HepG2 (cell line): ENCODE measurements at regions of chr10 and their contacts with region 1.

Region 1: DNA sequence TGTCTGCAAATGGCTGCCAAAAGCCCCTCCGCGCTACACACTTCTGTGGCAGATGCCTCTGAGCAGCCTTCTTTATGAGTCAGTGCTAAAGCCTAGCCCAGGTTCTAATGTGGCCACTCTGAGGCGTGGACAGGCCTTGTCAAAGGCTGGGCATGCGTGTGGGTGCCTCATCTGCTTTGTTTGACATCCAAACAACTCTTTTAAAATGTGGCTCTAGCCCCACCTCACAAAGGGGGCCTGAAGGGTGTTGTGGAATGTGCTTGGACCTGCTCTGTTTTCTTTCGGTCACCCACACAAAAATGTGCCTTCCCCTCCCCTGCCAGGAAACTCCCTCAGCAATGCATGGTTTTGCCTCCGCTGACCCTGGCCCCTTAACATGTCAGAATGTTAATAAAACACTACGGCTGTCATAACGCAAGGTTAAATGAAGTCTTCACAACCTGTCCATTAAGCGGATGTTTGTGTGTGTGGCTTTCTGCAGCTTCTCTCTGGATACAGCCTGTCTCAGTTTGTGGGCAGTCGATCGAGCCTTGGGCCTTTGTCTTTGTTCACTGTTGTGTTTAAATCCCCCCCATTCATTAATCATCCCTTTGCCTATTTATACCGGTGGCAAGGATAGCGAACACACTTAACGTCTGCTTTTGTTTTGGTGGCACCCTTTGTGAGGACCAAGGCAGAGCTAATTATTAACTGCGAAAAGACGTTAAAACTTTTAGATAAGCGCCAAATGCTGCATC is 718.9 kb downstream of the LRMDA start:
- DNase-seq: peak; percentile 96
- ATAC-seq: peak; percentile 96
- H3K4me3 ChIP-seq: peak overlapping the region; percentile 39 to 63 (median 54); a peak in 5 of 6 replicates
- H3K27ac ChIP-seq: peak overlapping the region; percentile 97
- H3K4me1 ChIP-seq: peaks cover 45% of the 10 kb centered on the region
- H3K27me3 ChIP-seq: no peaks in the 10 kb centered on the region
- CTCF ChIP-seq: peak; percentile 23
- EP300 ChIP-seq: peak in 1 of 2 experiments; percentile 90; a peak in 2 of 4 replicates
- POLR2A ChIP-seq: peak; percentile 57 to 79
- RAD21 ChIP-seq: no peak; the same call in 1 of the 2 replicates

Region 2: GRCh38 chr10:75165684-75166622 is 984.4 kb before region 1 on chr10:
- CTCF ChIA-PET with region 1: no interaction called
- POLR2A ChIA-PET with region 1: no interaction called
- in situ Hi-C with region 1: no loop called
- intact Hi-C with region 1: no loop called
- DNase-seq: no peak
- ATAC-seq: no peak
- H3K4me3 ChIP-seq: no peak overlapping the region
- H3K27ac ChIP-seq: peak overlapping the region; percentile 34
- H3K4me1 ChIP-seq: peaks cover 51% of the 10 kb centered on the region
- H3K27me3 ChIP-seq: no peaks in the 10 kb centered on the region
- CTCF ChIP-seq: no peak
- EP300 ChIP-seq: no peak
- POLR2A ChIP-seq: no peak
- RAD21 ChIP-seq: no peak

Region 3: GRCh38 chr10:76026905-76027304 is 123.4 kb before region 1 on chr10:
- CTCF ChIA-PET with region 1: no interaction called
- POLR2A ChIA-PET with region 1: interaction called, 14 read pairs
- in situ Hi-C with region 1: no loop called
- intact Hi-C with region 1: no loop called
- DNase-seq: no peak
- ATAC-seq: no peak
- H3K4me3 ChIP-seq: no peak overlapping the region
- H3K27ac ChIP-seq: peak overlapping the region; percentile 92
- H3K4me1 ChIP-seq: peaks cover 97% of the 10 kb centered on the region
- H3K27me3 ChIP-seq: no peaks in the 10 kb centered on the region
- CTCF ChIP-seq: peak; percentile 26; the same call in 1 of the 2 replicates
- EP300 ChIP-seq: no peak; a peak in 1 of 4 replicates
- POLR2A ChIP-seq: peak in 1 of 2 experiments; percentile 5; a peak in 1 of 4 replicates
- RAD21 ChIP-seq: no peak

Region 4: DNA sequence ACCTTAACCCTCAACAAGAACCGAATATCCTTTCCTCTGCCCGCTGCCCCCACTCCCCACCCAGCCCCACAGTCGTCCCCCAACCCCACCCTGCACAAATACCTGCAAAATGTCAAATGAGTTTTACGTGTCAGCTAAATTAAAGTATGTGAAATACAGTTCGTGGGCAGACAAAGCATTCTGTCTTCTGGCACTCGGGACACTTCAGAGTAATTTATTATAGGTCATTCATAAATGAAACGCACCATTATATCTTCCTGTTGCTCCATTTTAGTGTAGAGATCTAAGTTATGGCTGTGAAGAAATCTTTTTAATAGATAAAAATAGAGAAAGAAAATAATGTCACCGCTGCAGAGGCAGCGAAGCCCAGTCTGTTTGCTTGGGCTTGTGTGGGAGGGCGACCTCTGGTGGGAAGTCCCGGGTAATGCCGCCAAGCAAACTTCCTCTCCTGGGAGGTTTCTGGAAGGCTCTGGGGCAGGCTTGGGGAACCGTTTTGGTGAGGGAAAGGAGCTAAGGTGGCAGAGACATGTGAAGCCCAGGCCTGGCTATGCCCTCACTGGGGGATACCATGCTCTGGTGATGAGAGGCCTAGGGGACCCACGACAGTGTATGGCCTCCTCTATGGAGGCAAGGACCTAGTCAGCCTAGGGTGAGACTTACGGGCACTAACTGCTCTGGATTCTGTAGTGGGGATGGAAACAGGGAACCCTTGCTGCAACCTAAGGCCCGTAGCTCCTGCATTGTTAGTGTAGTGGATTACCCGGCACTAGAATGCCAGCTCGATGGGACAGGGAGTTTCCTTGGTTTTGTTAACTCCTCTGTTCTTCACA is 114.0 kb before region 1 on chr10:
- CTCF ChIA-PET with region 1: no interaction called
- POLR2A ChIA-PET with region 1: interaction called, 14 read pairs
- in situ Hi-C with region 1: no loop called
- intact Hi-C with region 1: no loop called
- DNase-seq: no peak
- ATAC-seq: 0 out of 3 replicates have a peak, but pooled peaks have one; percentile 15
- H3K4me3 ChIP-seq: no peak overlapping the region
- H3K27ac ChIP-seq: peak overlapping the region; percentile 97
- H3K4me1 ChIP-seq: peaks cover 57% of the 10 kb centered on the region
- H3K27me3 ChIP-seq: no peaks in the 10 kb centered on the region; a peak in 1 of 5 replicates
- CTCF ChIP-seq: peak; percentile 85
- EP300 ChIP-seq: no peak
- POLR2A ChIP-seq: no peak
- RAD21 ChIP-seq: peak; percentile 79

Region 5: DNA sequence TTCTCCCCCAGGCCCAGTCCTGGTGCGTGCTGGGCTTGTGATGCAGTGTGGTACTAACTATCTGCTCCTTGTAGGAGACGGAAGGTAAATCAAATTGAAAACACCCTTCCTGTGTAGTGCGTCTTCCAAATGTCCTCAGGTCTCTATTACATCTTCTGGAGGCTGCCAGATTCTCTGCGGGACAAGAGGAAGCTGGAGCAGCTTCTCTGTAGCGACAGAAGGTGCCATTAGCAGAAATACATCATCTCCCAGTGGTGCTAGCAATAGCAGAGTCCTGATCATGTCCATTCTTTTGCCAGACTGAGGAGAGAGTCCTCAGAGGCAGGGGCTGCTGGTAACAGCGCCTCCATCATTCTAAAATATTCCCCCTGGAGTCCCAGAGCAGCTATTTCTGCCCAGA is 43.7 kb before region 1 on chr10:
- CTCF ChIA-PET with region 1: interaction called, 3 read pairs
- POLR2A ChIA-PET with region 1: interaction called, 10 read pairs
- in situ Hi-C with region 1: no loop called
- intact Hi-C with region 1: loop called (anchors 1 kb)
- DNase-seq: no peak
- ATAC-seq: no peak
- H3K4me3 ChIP-seq: no peak overlapping the region
- H3K27ac ChIP-seq: no peak overlapping the region
- H3K4me1 ChIP-seq: peaks cover 21% of the 10 kb centered on the region
- H3K27me3 ChIP-seq: no peaks in the 10 kb centered on the region
- CTCF ChIP-seq: no peak
- EP300 ChIP-seq: no peak
- POLR2A ChIP-seq: no peak
- RAD21 ChIP-seq: no peak

Region 6: GRCh38 chr10:76297780-76298281 is 147.5 kb after region 1 on chr10:
- CTCF ChIA-PET with region 1: no interaction called
- POLR2A ChIA-PET with region 1: interaction called, 28 read pairs
- in situ Hi-C with region 1: no loop called
- intact Hi-C with region 1: loop called (anchors 2 kb)
- DNase-seq: peak; percentile 77
- ATAC-seq: peak; percentile 92
- H3K4me3 ChIP-seq: peak overlapping the region in 2 of 3 experiments; percentile 10 to 11; a peak in 2 of 6 replicates
- H3K27ac ChIP-seq: peak overlapping the region; percentile 54
- H3K4me1 ChIP-seq: peaks cover 54% of the 10 kb centered on the region
- H3K27me3 ChIP-seq: no peaks in the 10 kb centered on the region
- CTCF ChIP-seq: no peak
- EP300 ChIP-seq: peak; percentile 31 to 47; a peak in 2 of 4 replicates
- POLR2A ChIP-seq: no peak
- RAD21 ChIP-seq: no peak

Region 7: GRCh38 chr10:76303682-76304316 is 153.5 kb after region 1 on chr10:
- CTCF ChIA-PET with region 1: no interaction called
- POLR2A ChIA-PET with region 1: interaction called, 5 read pairs
- in situ Hi-C with region 1: no loop called
- intact Hi-C with region 1: loop called (anchors 2 kb)
- DNase-seq: peak; percentile 81
- ATAC-seq: peak; percentile 99
- H3K4me3 ChIP-seq: no peak overlapping the region
- H3K27ac ChIP-seq: no peak overlapping the region
- H3K4me1 ChIP-seq: peaks cover 47% of the 10 kb centered on the region
- H3K27me3 ChIP-seq: no peaks in the 10 kb centered on the region
- CTCF ChIP-seq: peak; percentile 89
- EP300 ChIP-seq: no peak
- POLR2A ChIP-seq: no peak
- RAD21 ChIP-seq: peak; percentile 80

Region 8: DNA sequence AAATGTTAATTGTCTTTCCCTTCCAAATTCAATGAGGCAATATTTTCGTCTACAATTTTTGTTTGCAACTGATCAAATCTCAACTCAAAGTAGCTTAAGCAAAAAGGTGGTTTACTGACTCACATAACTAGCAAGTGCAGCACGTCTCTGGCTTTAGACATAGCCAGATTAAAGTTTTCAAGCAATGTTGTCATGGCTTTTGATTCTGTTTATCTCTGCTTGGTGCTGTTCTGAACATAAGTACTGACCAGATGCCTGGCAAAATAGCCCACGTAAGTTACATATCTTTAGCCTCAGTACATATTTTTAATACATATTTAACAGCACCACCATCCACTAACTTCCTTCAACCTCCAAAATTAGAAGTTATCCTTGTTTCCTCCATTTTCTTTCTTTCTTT is 609.4 kb after region 1 on chr10:
- CTCF ChIA-PET with region 1: no interaction called
- POLR2A ChIA-PET with region 1: no interaction called
- in situ Hi-C with region 1: no loop called
- intact Hi-C with region 1: no loop called
- DNase-seq: no peak
- ATAC-seq: no peak
- H3K4me3 ChIP-seq: no peak overlapping the region
- H3K27ac ChIP-seq: no peak overlapping the region
- H3K4me1 ChIP-seq: no peaks in the 10 kb centered on the region
- H3K27me3 ChIP-seq: peaks cover 0 to 4% of the 10 kb centered on the region in 2 experiments; a peak in 1 of 5 replicates
- CTCF ChIP-seq: no peak
- EP300 ChIP-seq: no peak
- POLR2A ChIP-seq: no peak
- RAD21 ChIP-seq: no peak